Activated CD8-positive, alpha-beta T cell treated with anti-CD3 and anti-CD28 coated beads, Interleukin-2, amount 10 ng/mL, durations not matched to agents 7 days and 5 days (primary cell): ENCODE measurements at regions of chr11 and their contacts with region 1.

Region 1: DNA sequence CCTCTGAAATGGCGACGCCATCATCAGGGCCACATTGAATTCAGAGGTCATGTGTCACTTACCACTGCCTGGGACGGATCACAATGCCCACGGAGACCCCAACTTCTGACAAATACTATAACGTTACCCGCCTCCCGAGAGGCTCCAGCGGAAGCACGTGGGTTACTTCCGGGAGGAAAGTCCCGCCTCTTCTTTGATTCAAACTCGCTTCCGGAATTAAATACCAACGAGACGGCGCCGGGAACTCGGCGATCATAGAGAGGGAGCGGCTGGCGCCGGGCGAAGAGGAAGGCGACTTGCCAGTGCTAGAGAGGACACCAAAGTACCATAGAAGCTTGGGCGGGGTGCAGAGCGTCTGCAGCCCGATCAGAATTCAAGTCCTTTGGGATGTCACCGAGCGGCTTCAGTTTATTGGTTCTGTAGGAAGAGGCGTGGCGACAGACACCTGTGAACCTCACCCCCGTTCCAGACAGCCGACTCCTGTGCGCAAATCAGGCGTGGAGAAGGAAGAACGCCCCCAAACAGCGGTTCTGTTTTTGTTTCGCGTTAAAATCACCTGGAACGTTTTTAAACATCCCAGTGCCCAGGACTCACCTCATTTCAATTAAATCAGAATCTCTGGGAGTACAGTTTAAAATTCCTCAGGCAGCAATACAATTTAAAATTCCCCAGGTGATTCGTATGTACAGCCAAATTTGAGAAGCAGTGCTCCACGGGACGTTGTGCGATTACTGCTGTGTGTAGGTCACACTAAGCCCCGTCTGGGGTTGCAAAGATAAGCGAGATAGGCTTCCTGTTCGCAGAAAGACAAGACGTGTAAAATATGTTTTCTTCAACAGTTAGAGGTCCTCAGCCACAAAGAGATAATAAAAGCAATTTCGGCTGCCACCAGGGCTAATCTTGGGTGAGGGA is at the start of gene TIMM10:
- DNase-seq: peak; percentile 97
- ATAC-seq: peak; percentile 97
- H3K4me3 Mint-ChIP-seq: peak within 1 kb of the TSS; percentile 82
- H3K27ac Mint-ChIP-seq: peak within 1 kb of the TSS; percentile 88
- H3K4me1 Mint-ChIP-seq: peaks cover 47% of the 10 kb centered on the region
- H3K27me3 Mint-ChIP-seq: no peaks in the 10 kb centered on the region
- total RNA-seq, gene TIMM10: 65.4 to 65.8 TPM

Region 2: DNA sequence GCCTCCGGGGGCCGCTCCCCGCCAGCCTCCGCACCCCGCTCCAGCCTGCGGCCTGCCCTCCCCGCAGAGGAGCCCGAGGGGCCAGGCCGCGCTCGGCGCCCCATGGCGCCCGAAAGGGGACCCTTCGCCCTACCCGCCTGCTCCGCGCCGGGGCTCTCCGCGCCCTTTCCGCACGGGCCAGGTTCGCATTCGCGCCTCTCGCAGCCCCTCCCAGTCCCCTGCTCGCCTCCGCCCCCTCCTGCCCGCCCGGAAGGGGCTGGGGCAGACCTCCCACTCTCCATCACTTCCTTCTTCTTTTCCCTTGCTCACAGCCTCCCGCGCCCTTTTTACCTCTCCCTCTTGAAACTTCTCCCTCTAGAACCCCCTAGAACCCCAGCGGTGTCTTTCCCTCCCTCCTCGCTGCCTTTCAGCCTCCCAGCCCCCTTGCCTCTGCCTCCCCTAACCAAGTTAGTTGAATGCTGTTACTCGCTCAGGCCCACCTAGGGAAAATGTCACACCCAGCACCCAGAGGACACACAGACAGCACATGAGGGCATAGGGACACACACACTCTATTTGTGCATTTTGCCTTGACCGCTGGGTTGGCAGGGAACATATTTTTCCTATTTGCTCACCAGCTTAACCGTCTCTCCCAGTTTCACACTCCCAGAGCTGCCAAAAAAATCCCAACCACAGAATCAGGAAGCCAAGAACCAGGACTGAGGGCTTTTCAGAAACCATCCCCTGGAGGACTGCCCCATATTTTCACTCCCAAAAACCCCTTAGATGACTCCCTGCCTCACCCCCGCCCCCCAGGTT is 103.7 kb before region 1 on chr11 and contains the start of gene SLC43A3:
- CTCF ChIA-PET with region 1: interaction called, 10 read pairs
- POLR2A ChIA-PET with region 1: no interaction called
- DNase-seq: peak; percentile 80
- ATAC-seq: peak; percentile 70
- H3K4me3 Mint-ChIP-seq: peak within 1 kb of the TSS; percentile 88
- H3K27ac Mint-ChIP-seq: peak within 1 kb of the TSS; percentile 88
- H3K4me1 Mint-ChIP-seq: peaks cover 49% of the 10 kb centered on the region
- H3K27me3 Mint-ChIP-seq: peaks cover 10% of the 10 kb centered on the region
- total RNA-seq, gene SLC43A3: 103 to 120 TPM

Region 3: GRCh38 chr11:57480409-57481137 is 50.3 kb before region 1 on chr11:
- CTCF ChIA-PET with region 1: interaction called, 36 read pairs
- POLR2A ChIA-PET with region 1: no interaction called
- DNase-seq: peak; percentile 87
- ATAC-seq: peak; percentile 68
- H3K4me3 Mint-ChIP-seq: no peak overlapping the region
- H3K27ac Mint-ChIP-seq: no peak overlapping the region
- H3K4me1 Mint-ChIP-seq: peaks cover 27% of the 10 kb centered on the region
- H3K27me3 Mint-ChIP-seq: peaks cover 39% of the 10 kb centered on the region

Region 4: DNA sequence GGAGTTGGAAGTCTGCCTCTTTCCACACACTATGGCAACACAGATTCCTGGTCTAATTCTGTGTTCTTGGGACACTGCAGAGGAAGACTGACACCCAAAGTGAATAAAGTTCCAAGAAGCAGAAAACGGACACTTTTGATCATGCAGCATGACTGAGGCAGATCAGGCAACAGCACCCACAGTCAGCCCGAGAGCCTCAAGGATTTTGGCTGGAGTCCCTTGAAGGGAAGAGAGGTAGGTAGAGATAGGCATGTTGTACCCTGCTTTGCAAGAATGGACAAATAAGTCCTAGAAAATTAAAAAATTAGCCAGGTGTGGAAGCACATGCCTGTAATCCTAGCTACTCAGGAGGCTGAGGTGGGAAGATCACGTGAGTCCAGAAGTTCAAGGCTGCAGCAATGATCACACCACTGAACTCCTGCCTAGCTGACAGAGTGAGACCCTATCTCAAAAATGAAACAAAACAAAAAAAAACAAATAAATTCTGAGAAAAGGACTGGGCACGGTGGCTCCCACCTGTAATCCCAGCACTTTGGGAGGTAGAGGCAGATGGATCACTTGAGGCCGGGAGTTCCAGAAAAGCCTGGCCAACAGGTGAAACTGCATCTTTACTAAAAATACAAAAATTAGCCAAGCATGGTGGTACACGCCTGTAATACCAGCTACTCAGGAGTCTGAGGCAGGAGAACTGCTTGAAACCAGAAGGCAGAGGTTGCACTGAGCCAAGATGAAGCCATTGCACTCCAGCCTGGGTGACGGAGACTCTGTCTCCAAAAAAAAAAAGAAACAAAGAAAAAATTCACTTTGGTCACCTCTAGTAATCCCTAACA is 22.3 kb before region 1 on chr11:
- CTCF ChIA-PET with region 1: interaction called, 130 read pairs
- POLR2A ChIA-PET with region 1: interaction called, 47 read pairs
- DNase-seq: no peak
- ATAC-seq: no peak
- H3K4me3 Mint-ChIP-seq: no peak overlapping the region
- H3K27ac Mint-ChIP-seq: no peak overlapping the region
- H3K4me1 Mint-ChIP-seq: peaks cover 31% of the 10 kb centered on the region
- H3K27me3 Mint-ChIP-seq: no peaks in the 10 kb centered on the region

Region 5: GRCh38 chr11:57667736-57668435 is 137.0 kb after region 1 on chr11 and contains the start of gene ZDHHC5:
- CTCF ChIA-PET with region 1: interaction called, 10 read pairs
- POLR2A ChIA-PET with region 1: interaction called, 3 read pairs
- DNase-seq: peak; percentile 100
- ATAC-seq: peak; percentile 92
- H3K4me3 Mint-ChIP-seq: peak within 1 kb of the TSS; percentile 96
- H3K27ac Mint-ChIP-seq: peak within 1 kb of the TSS; percentile 99
- H3K4me1 Mint-ChIP-seq: peaks cover 45% of the 10 kb centered on the region
- H3K27me3 Mint-ChIP-seq: no peaks in the 10 kb centered on the region
- total RNA-seq, gene ZDHHC5: 77.8 to 82.4 TPM

Region 6: DNA sequence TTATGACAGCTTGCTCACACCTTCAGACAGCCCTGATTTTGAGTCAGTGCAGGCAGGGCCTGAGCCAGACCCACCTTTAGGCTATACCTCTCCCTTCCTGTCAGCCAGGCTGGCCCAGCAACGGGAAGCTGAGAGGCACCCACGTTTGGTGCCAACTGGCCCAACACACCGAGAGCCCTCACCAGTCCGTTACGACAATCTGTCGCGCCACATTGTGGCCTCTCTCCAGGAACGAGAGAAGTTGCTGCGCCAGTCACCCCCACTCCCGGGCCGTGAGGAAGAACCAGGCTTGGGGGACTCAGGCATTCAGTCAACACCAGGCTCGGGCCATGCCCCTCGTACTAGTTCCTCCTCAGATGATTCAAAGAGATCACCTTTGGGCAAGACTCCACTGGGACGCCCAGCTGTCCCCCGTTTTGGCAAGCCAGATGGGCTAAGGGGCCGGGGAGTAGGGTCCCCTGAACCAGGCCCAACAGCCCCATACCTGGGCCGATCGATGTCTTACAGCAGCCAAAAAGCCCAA is 168.1 kb after region 1 on chr11:
- CTCF ChIA-PET with region 1: no interaction called
- POLR2A ChIA-PET with region 1: no interaction called
- DNase-seq: no peak
- ATAC-seq: peak; percentile 25
- H3K4me3 Mint-ChIP-seq: no peak overlapping the region
- H3K27ac Mint-ChIP-seq: no peak overlapping the region
- H3K4me1 Mint-ChIP-seq: no peaks in the 10 kb centered on the region
- H3K27me3 Mint-ChIP-seq: no peaks in the 10 kb centered on the region